ENCODE measurements at regions of chr7 and their contacts with region 1.

Region 1: DNA sequence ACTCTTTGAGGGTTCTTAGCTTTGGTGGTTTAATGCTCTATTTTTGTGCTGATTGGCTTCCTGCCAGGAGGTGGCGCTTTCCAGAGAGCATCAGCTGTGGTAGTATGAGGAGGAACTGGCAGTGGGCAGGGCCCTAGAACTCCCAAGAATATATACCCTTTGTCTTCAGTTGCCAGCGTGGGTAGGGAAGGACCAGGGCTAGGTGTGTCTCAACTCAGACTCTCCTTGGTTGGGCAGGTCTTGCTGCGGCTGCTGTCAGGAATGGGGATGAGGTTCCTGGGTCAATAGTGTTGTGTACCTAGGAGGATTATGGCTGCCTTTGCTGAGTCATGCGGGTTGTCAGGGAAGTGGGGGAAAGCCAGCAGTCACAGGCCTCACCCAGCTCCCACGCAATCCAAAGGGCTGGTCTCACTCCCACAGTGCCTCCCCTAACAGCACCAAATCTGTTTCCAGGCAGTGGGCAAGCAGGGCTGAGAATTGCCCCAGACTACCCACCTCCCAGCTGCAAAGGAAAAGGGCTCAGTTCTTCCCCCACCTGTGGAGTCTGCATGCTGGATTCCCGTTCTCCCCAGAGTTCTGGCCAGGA is 191.5 kb downstream of the PHTF2 start:
- DNase-seq: peak in 1 of 2 experiments; percentile 81
- H3K4me3 ChIP-seq: no peak overlapping the region
- H3K27ac ChIP-seq: no peak overlapping the region
- H3K4me1 ChIP-seq: peaks cover 3 to 6% (median 4%) of the 10 kb centered on the region in 4 experiments; a peak in 6 of 7 replicates
- H3K27me3 ChIP-seq: no peaks in the 10 kb centered on the region
- CTCF ChIP-seq: peak; percentile 50 to 63 (median 62)
- EP300 ChIP-seq: no peak
- POLR2A ChIP-seq: no peak
- RAD21 ChIP-seq: peak; percentile 57 to 60

Region 2: DNA sequence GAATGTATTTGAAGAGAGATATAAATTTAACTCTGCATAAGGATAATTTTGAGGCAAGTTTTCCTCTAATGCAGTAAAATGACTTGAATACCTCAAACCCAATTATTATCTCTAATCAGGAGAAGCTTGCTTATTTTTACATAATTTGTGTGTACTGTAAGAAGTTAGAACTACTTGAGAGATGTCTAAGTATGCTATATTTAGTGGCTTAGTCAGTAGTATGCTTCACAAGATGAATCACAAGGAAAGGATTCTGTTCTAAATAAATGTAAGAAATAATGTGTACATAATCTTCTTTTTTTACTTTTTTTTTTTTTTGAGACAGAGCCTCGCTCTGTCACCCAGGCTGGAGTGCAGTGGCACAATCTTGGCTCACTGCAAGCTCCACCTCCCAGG is 177.8 kb before region 1 on chr7:
- CTCF ChIA-PET with region 1: no interaction called
- POLR2A ChIA-PET with region 1: no interaction called
- DNase-seq: no peak
- H3K4me3 ChIP-seq: no peak overlapping the region
- H3K27ac ChIP-seq: no peak overlapping the region
- H3K4me1 ChIP-seq: no peaks in the 10 kb centered on the region
- H3K27me3 ChIP-seq: no peaks in the 10 kb centered on the region
- CTCF ChIP-seq: no peak
- EP300 ChIP-seq: no peak
- POLR2A ChIP-seq: no peak
- RAD21 ChIP-seq: no peak

Region 3: DNA sequence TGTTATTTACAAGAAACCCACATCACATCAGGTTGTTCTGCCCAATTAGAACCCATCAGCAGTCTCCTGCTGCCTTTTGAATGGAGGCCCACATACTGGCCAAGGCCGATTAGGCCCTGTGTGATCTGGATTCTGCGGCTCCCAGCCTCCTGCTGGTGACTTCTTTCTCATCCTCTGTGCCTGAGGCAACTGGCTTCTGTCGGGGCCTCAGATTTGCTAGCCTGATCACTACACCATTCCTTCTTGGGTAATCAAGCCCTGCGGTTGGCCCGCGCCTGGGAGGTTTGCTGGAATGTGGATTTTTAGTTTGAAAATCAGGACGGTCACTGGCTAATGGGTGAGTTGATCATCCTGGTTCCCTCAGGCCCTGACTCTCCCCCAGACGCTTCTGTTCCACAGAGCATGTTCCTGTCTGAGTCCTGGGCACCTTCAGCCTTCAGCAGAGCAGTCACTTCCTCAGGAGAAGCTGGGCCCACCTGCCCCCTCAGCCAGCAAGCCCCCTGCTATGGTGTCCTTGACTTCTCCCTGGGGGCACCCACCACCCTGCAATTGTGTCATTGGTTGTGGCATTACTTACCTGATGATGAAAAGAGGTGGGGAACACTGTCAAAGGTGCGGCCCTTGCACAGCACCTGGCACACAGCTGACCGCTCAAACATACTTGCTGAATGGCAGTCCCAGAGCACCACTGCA is 16.1 kb after region 1 on chr7:
- CTCF ChIA-PET with region 1: interaction called, 16 read pairs
- POLR2A ChIA-PET with region 1: no interaction called
- DNase-seq: no peak
- H3K4me3 ChIP-seq: no peak overlapping the region
- H3K27ac ChIP-seq: no peak overlapping the region
- H3K4me1 ChIP-seq: no peaks in the 10 kb centered on the region
- H3K27me3 ChIP-seq: no peaks in the 10 kb centered on the region
- CTCF ChIP-seq: no peak
- EP300 ChIP-seq: no peak
- POLR2A ChIP-seq: no peak
- RAD21 ChIP-seq: peak in 1 of 2 experiments; percentile 26; a peak in 2 of 4 replicates

Region 4: DNA sequence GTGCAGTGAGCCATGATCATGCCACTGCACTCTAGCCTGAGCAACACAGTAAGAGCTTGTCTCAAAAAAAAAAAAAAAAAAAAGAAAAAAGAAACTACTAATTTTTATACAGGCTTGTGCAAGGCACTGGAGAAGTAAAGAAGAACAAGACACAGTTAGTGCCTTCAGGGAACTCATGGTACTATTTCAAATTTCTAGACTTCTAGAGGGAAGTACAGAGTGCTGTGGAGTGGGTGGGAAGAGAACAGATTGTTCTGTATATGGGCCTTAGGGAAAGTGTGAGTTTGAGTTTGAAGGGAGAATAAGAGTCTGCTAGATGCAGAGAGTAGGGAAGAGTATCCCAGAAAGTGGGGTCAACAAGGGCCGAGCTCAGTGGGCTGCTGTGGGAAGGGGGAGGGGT is 43.3 kb after region 1 on chr7:
- CTCF ChIA-PET with region 1: interaction called, 12 read pairs
- POLR2A ChIA-PET with region 1: no interaction called
- DNase-seq: no peak
- H3K4me3 ChIP-seq: no peak overlapping the region
- H3K27ac ChIP-seq: no peak overlapping the region
- H3K4me1 ChIP-seq: peaks cover 3 to 18% (median 10%) of the 10 kb centered on the region in 4 experiments; a peak in 6 of 7 replicates
- H3K27me3 ChIP-seq: no peaks in the 10 kb centered on the region
- CTCF ChIP-seq: no peak
- EP300 ChIP-seq: no peak
- POLR2A ChIP-seq: no peak
- RAD21 ChIP-seq: no peak